ENCODE measurements at regions of chr13 and their contacts with region 1.

Region 1: GRCh38 chr13:44050450-44051063 is 170.9 kb downstream of the LACC1 start:
- DNase-seq: no peak
- H3K4me3 ChIP-seq: no peak overlapping the region
- H3K27me3 ChIP-seq: peaks cover 8% of the 10 kb centered on the region
- CTCF ChIP-seq: peak; percentile 76

Region 2: DNA sequence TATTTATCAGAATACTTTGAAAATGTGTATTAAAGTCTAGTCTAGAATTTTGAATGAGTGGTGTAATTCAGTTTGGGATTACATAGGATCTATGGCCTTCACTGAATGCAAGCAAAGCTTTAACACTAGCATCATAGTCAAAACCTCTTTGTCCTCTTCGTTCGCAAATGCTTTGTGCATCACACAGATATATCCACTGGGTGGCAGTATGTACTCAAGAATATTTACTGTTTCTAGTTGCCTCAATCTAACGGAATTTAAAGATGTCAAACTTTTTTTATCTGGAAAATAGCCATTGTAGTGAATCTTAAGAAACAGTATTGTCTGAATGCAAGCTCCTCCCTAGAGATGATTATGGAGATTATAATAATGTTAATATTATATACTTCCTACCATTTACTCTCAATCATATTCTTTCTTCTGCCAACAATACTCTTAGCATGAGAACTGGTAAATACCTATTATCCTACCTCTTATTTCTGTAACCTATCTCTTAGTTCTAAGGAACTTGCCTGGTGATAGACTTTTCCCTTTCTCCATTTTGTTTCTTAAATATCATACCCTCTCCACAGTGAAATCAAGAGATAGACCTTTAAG is 145.0 kb before region 1 on chr13:
- CTCF ChIA-PET with region 1: interaction called, 13 read pairs
- POLR2A ChIA-PET with region 1: no interaction called
- DNase-seq: no peak
- H3K4me3 ChIP-seq: no peak overlapping the region
- H3K27me3 ChIP-seq: no peaks in the 10 kb centered on the region
- CTCF ChIP-seq: peak; percentile 54

Region 3: DNA sequence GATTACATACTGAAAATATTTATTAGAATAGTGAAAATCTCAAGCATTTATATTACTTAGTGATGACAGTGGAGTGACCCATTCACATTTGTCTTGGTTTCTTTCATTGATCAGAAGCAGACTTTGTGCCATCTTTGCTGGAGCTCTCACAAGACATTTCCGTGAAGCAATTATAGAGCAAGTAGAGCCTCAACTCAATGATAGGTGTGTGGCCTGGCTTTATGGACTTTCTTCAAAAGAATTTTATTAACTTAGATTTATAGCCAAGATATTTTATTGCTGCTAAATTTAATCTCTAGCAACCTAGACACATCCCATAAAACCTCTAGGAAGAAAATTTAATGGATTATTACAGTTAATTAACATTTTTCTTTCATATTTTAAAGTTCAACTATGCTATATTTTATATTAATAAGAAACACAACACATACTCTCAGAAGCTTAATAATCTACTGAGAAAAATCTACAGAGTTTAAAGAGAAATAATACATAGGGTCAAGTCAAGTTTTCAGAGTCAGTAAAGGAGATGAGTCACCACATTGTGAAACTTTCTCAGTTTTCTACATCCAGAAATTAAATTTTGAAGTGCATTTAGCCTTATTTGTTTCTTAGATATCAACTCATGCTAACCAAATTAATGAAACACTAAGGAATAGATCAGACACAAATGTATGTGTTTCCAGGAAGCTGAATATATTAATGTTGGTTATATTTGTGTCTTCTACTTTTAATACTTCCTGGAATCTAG is 10.3 kb before region 1 on chr13:
- CTCF ChIA-PET with region 1: no interaction called
- POLR2A ChIA-PET with region 1: no interaction called
- DNase-seq: no peak
- H3K4me3 ChIP-seq: no peak overlapping the region
- H3K27me3 ChIP-seq: no peaks in the 10 kb centered on the region
- CTCF ChIP-seq: no peak